GM12878 (cell line): ENCODE measurements at regions of chr3 and their contacts with region 1.

Region 1: GRCh38 chr3:131026321-131027178 is at the starts of genes ASTE1 and NEK11:
- DNase-seq: peak; percentile 41
- ATAC-seq: peak; percentile 98
- H3K4me3 ChIP-seq: peak within 1 kb of the TSS; percentile 97
- H3K27ac ChIP-seq: peak within 1 kb of the TSS; percentile 92
- H3K4me1 ChIP-seq: no peaks in the 10 kb centered on the region; the same call in 1 of the 2 replicates
- H3K27me3 ChIP-seq: no peaks in the 10 kb centered on the region
- CTCF ChIP-seq: no peak
- EP300 ChIP-seq: no peak
- POLR2A ChIP-seq: peak; percentile 98
- RAD21 ChIP-seq: no peak
- polyA plus RNA-seq, gene ASTE1: 8.2 to 12.0 TPM
- polyA plus RNA-seq, gene NEK11: 0.05 to 0.10 TPM

Region 2: DNA sequence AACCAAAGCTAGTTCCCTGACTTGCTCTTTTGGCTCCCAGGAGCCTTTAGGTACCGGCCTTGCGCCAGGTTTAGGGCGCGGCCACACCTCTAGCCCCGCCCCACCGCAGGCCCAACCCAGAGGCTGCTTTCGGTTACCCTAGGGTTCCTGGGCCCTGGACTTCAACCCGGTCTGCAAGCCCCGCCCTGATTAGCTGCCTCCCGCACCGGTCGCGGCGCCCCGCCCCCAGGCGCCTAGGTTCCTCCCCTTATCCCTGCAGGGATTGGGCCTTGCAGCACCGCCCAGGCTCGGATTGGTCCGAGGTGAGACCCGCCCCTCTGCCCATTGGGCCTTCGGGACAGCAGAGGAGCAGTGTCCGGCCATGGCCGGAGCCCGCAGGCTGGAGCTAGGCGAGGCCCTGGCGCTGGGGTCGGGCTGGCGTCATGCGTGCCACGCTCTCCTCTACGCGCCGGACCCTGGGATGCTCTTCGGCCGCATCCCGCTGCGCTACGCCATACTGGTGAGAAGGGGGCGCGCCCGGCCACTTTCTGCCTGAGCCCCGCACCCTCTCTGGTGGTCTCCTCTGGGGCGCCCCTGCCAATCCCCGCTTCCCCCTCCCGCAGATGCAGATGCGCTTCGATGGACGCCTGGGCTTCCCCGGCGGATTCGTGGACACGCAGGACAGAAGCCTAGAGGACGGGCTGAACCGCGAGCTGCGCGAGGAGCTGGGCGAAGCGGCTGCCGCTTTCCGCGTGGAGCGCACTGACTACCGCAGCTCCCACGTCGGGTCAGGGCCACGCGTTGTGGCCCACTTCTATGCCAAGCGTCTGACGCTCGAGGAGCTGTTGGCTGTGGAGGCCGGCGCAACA is 355.1 kb after region 1 on chr3 and contains the start of gene NUDT16:
- CTCF ChIA-PET with region 1: no interaction called
- POLR2A ChIA-PET with region 1: no interaction called
- RAD21 ChIA-PET with region 1: no interaction called
- SMC1A ChIA-PET with region 1: no interaction called
- in situ Hi-C with region 1: no loop called
- intact Hi-C with region 1: loop called (anchors 5 kb)
- DNase-seq: peak; percentile 91
- ATAC-seq: peak; percentile 98
- H3K4me3 ChIP-seq: peak within 1 kb of the TSS; percentile 90
- H3K27ac ChIP-seq: peak within 1 kb of the TSS; percentile 69
- H3K4me1 ChIP-seq: peaks cover 7% of the 10 kb centered on the region; the same call in 1 of the 2 replicates
- H3K27me3 ChIP-seq: no peaks in the 10 kb centered on the region
- CTCF ChIP-seq: no peak
- EP300 ChIP-seq: no peak
- POLR2A ChIP-seq: peak; percentile 98
- RAD21 ChIP-seq: no peak
- polyA plus RNA-seq, gene NUDT16: 1.4 to 3.2 TPM

Region 3: GRCh38 chr3:131494706-131495105 is 468.2 kb after region 1 on chr3:
- CTCF ChIA-PET with region 1: no interaction called
- POLR2A ChIA-PET with region 1: no interaction called
- RAD21 ChIA-PET with region 1: no interaction called
- SMC1A ChIA-PET with region 1: no interaction called
- in situ Hi-C with region 1: no loop called
- intact Hi-C with region 1: loop called (anchors 10 kb)
- DNase-seq: no peak
- ATAC-seq: peak; percentile 23; the same call in 1 of the 3 replicates
- H3K4me3 ChIP-seq: no peak overlapping the region
- H3K27ac ChIP-seq: no peak overlapping the region
- H3K4me1 ChIP-seq: no peaks in the 10 kb centered on the region
- H3K27me3 ChIP-seq: no peaks in the 10 kb centered on the region
- CTCF ChIP-seq: no peak
- EP300 ChIP-seq: no peak
- POLR2A ChIP-seq: no peak
- RAD21 ChIP-seq: no peak